ENCODE measurements at regions of chr5 and their contacts with region 1.

Region 1: GRCh38 chr5:19388391-19388790 is 599.6 kb downstream of the CDH18 start:
- DNase-seq: no peak
- ATAC-seq: no peak
- H3K4me3 ChIP-seq: no peak overlapping the region
- H3K4me3 Mint-ChIP-seq: no peak overlapping the region
- H3K27ac ChIP-seq: no peak overlapping the region
- H3K27ac Mint-ChIP-seq: no peak overlapping the region
- H3K4me1 ChIP-seq: no peaks in the 10 kb centered on the region
- H3K4me1 Mint-ChIP-seq: no peaks in the 10 kb centered on the region
- H3K27me3 ChIP-seq: no peaks in the 10 kb centered on the region
- H3K27me3 Mint-ChIP-seq: no peaks in the 10 kb centered on the region

Region 2: DNA sequence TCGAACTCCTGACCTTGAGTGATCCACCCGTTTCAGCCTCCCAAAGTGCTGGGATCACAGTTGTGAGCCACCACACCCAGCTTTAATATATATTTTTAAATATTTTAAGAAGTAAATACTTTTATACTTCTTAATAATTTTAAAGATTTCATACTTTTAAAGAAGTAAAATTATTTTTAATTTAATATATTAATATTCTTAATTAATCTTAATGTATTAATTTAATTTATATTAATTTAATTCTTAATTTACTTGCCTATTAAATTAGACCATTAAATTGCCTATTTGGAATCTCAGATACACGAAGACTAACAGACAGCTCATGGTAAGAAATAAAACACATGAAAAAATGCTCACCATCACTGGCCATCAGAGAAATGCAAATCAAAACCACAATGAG is 487.7 kb before region 1 on chr5:
- CTCF ChIA-PET with region 1: no interaction called
- POLR2A ChIA-PET with region 1: interaction called in 1 of 2 experiments, 13 read pairs
- DNase-seq: no peak
- ATAC-seq: no peak
- H3K4me3 ChIP-seq: no peak overlapping the region
- H3K4me3 Mint-ChIP-seq: no peak overlapping the region
- H3K27ac ChIP-seq: no peak overlapping the region
- H3K27ac Mint-ChIP-seq: no peak overlapping the region
- H3K4me1 ChIP-seq: no peaks in the 10 kb centered on the region
- H3K4me1 Mint-ChIP-seq: no peaks in the 10 kb centered on the region
- H3K27me3 ChIP-seq: no peaks in the 10 kb centered on the region
- H3K27me3 Mint-ChIP-seq: no peaks in the 10 kb centered on the region

Region 3: GRCh38 chr5:19739671-19740070 is 351.3 kb after region 1 on chr5:
- CTCF ChIA-PET with region 1: no interaction called
- POLR2A ChIA-PET with region 1: no interaction called
- DNase-seq: no peak
- ATAC-seq: no peak
- H3K4me3 ChIP-seq: no peak overlapping the region
- H3K4me3 Mint-ChIP-seq: no peak overlapping the region
- H3K27ac ChIP-seq: no peak overlapping the region
- H3K27ac Mint-ChIP-seq: no peak overlapping the region
- H3K4me1 ChIP-seq: no peaks in the 10 kb centered on the region
- H3K4me1 Mint-ChIP-seq: no peaks in the 10 kb centered on the region
- H3K27me3 ChIP-seq: no peaks in the 10 kb centered on the region
- H3K27me3 Mint-ChIP-seq: no peaks in the 10 kb centered on the region